Calu3 (cell line): ENCODE measurements at regions of chr21 and their contacts with region 1.

Region 1: DNA sequence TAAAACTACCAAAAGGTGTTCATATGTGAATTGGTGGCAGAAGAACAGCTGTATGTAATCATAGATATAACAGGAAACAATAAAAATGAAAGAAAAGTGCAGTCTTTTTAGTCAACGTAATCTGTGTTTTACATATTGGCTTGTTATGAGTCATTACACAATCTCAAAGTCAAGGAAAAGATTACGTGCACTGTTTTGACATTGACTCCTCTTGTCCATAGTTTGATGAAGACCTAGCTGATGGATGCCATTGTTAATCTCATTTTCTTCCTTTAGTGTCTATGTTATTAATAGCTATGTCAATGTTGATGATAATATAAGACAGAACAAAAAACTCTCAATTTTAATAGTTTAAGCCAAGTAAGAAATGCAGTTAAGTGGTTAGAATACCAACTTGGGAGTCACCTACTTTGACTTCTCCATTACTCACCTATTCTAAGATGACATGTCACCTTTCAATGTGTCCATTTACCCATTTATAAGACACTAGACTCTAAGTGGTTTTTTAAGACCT is 84.5 kb upstream of the SAMSN1 start:
- DNase-seq: no peak
- H3K4me3 Mint-ChIP-seq: no peak overlapping the region
- H3K27ac Mint-ChIP-seq: no peak overlapping the region
- H3K4me1 Mint-ChIP-seq: peaks cover 5% of the 10 kb centered on the region
- H3K27me3 Mint-ChIP-seq: no peaks in the 10 kb centered on the region
- CTCF ChIP-seq: no peak

Region 2: DNA sequence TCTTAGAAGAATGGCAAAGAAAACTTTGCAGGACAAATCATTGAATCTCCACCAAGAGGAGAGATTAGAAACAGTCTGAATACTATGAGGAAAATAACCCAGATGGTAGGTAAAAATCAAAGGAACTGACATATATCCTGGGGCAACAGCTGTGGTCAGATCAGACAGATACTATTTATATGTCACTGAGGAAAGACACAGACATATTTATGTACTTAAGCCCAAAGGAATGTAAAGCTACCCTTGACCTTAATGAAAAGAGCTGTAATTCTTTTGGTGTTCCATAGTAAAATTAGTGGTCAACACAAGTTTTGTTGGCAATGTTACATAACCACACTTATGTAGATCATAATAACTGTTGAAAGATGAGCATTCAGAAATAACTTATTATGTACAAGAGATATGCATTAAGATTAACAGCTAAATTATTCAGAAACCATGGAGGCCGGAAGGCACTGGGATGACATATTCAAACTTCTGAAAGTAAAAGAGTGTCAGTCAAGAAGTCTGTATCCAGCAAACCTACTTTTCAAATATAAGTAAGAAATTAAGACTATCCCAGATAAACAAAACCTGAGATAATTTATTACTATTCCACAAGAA is 81.6 kb after region 1 on chr21:
- CTCF ChIA-PET with region 1: no interaction called
- intact Hi-C with region 1: loop called (anchors 10 kb)
- DNase-seq: no peak
- H3K4me3 Mint-ChIP-seq: no peak overlapping the region
- H3K27ac Mint-ChIP-seq: no peak overlapping the region
- H3K4me1 Mint-ChIP-seq: no peaks in the 10 kb centered on the region
- H3K27me3 Mint-ChIP-seq: no peaks in the 10 kb centered on the region
- CTCF ChIP-seq: no peak